ENCODE measurements at regions of chr22 and their contacts with region 1.

Region 1: DNA sequence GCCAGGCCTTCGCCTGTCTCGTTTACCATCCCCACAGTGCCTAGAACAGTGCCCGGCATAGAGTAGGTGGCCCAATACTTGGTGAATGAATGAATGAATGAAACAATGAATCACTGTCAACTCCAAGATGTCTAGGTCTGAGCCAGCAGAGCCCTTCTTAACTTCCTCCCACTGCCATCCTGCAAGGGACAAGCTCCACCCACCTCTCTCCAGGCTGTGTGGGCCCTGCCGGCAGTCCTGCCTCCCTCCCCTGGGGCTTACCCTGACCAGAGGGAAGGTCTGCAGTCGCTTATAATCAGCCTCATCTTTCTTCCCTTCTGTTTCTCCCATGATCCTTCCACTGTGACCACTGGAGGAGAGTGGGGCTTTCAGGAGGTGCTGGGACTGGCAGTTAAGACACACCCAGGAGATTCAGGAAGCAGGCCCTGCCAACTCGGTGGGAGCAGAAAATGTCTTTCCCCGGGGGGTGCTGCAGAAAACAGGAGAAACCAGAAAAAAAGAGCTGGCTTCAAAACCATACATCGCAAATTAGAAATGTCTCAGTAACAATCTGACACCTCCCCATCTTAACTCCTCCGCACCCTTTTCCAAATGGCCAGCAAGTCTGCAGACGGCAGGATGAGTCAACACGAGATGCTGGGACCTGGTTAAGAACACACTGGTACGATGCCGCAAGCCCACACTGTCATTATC is 11.4 kb downstream of the DNAL4 start:
- DNase-seq: no peak
- H3K4me3 ChIP-seq: no peak overlapping the region
- H3K27ac ChIP-seq: no peak overlapping the region
- H3K4me1 ChIP-seq: peaks cover under 1 to 9% of the 10 kb centered on the region in 2 donors
- H3K27me3 ChIP-seq: no peaks in the 10 kb centered on the region
- CTCF ChIP-seq: no peak
- POLR2A ChIP-seq: no peak

Region 2: DNA sequence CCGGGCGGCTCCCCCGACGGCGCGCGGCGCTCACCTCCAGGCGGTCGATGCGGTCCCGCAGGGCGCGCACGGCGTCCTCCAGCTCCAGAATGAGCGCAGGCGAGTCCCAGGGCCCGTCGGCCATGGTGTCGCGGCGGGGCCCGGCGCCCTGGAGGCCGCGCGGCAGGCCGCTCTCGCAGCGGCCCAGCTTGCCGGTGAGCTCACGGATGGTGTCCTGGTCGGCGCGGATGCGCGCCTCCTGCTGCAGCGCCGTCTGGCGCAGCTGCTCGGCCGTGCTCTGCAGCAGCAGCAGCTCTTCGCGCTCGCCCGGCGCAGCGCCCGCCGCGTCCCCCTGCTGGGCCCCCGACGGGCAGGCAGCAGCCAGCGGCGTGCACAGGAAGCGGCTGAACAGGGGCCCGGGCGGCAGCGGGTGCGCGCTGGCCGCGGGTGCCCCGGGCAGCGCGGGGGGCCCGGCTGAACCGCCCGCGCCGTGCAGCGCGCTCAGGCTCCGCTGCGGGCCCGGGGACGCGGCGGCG is 60.7 kb after region 1 on chr22:
- intact Hi-C with region 1: loop called (anchors 5 kb)
- DNase-seq: peak; percentile 60 to 61
- H3K4me3 ChIP-seq: peak overlapping the region in 1 of 3 donors; percentile 38
- H3K27ac ChIP-seq: peak overlapping the region in 1 of 3 donors; percentile 30
- H3K4me1 ChIP-seq: peaks cover 5 to 13% of the 10 kb centered on the region in 2 donors
- H3K27me3 ChIP-seq: no peaks in the 10 kb centered on the region
- CTCF ChIP-seq: peak in 3 of 6 experiments; percentile 33 to 39 (median 39)
- POLR2A ChIP-seq: no peak

Region 3: DNA sequence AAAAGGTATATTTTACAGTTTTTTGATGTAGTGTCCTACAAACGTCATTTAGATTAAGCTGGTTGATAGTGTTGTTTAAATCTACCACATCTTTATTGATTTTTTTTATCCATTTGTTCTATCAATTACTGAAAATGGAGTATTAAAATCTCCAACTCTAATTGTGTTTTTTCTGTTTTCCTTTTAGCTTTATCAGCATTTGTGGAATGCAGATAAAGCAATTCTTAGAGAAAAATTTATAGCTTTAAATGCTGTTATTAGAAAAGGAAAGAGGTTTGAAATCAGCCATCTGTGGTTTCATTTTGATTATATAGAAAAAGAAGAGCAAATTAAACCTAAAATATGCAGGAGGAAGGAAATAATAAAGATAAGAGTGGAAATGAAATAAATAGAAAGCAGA is 128.9 kb after region 1 on chr22:
- intact Hi-C with region 1: no loop called
- DNase-seq: no peak
- H3K4me3 ChIP-seq: no peak overlapping the region
- H3K27ac ChIP-seq: no peak overlapping the region
- H3K4me1 ChIP-seq: no peaks in the 10 kb centered on the region
- H3K27me3 ChIP-seq: no peaks in the 10 kb centered on the region
- CTCF ChIP-seq: no peak
- POLR2A ChIP-seq: no peak